Activated naive CD4-positive, alpha-beta T cell treated with anti-CD3 and anti-CD28 coated beads for 36 hours (primary cell): ENCODE measurements at regions of chr12 and their contacts with region 1.

Region 1: GRCh38 chr12:123972457-123973401 is at the starts of genes CCDC92 and ZNF664:
- DNase-seq: peak; percentile 94
- H3K4me3 Mint-ChIP-seq: peak within 1 kb of the TSS; percentile 88
- H3K27ac Mint-ChIP-seq: peak within 1 kb of the TSS; percentile 61
- H3K4me1 Mint-ChIP-seq: peaks cover 33% of the 10 kb centered on the region
- H3K27me3 Mint-ChIP-seq: no peaks in the 10 kb centered on the region
- total RNA-seq, gene CCDC92: 3.3 to 3.7 TPM
- total RNA-seq, gene ZNF664: 42.2 to 46.0 TPM

Region 2: DNA sequence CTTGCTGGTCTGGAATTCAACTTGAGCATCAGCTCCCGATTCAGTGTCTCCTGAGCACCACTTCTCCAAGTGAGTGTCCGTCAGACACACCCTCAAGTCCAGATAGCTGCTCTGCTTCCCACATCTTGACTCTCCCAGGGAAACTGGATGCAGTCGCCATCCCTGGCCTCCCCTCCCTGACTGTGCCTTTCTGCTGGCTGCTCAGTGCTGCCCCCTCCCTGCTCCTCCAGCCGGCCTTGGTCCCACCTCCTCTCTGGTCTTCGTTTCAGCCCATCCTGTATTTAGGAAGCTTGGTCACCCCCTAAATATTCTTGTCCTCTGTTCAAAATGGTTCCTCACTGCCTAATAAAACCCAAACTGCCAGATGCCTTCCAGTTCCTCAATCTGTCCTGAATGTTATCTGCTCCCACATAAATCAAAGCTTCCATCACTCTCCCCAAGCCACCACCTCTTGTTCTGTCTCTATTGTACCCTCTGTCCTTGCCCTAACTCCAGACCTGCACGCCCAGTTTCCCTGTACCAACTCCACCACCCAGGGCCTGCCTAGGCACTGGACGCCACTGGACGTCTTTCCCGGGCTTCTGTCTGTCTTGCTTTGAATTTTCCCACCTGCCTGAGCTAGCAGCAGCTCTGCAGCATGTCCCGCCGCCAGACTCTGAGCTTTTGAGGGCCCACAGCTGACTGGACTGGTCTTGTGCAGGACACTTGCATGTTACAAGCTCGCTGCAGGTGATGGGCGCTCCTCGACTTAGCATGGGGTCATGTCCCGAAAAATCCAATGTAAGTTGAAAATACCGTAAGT is 33.8 kb before region 1 on chr12:
- CTCF ChIA-PET with region 1: interaction called, 3 read pairs
- intact Hi-C with region 1: loop called (anchors 1 kb)
- DNase-seq: peak; percentile 36
- H3K4me3 Mint-ChIP-seq: peak overlapping the region; percentile 55
- H3K27ac Mint-ChIP-seq: peak overlapping the region; percentile 60
- H3K4me1 Mint-ChIP-seq: peaks cover 24% of the 10 kb centered on the region
- H3K27me3 Mint-ChIP-seq: no peaks in the 10 kb centered on the region

Region 3: GRCh38 chr12:124006085-124006845 is 33.5 kb after region 1 on chr12:
- CTCF ChIA-PET with region 1: no interaction called
- intact Hi-C with region 1: loop called (anchors 2 kb)
- DNase-seq: peak; percentile 70
- H3K4me3 Mint-ChIP-seq: peak overlapping the region; percentile 30
- H3K27ac Mint-ChIP-seq: peak overlapping the region; percentile 19
- H3K4me1 Mint-ChIP-seq: peaks cover 32% of the 10 kb centered on the region
- H3K27me3 Mint-ChIP-seq: no peaks in the 10 kb centered on the region